A673 (cell line): ENCODE measurements at regions of chr12 and their contacts with region 1.

Region 1: DNA sequence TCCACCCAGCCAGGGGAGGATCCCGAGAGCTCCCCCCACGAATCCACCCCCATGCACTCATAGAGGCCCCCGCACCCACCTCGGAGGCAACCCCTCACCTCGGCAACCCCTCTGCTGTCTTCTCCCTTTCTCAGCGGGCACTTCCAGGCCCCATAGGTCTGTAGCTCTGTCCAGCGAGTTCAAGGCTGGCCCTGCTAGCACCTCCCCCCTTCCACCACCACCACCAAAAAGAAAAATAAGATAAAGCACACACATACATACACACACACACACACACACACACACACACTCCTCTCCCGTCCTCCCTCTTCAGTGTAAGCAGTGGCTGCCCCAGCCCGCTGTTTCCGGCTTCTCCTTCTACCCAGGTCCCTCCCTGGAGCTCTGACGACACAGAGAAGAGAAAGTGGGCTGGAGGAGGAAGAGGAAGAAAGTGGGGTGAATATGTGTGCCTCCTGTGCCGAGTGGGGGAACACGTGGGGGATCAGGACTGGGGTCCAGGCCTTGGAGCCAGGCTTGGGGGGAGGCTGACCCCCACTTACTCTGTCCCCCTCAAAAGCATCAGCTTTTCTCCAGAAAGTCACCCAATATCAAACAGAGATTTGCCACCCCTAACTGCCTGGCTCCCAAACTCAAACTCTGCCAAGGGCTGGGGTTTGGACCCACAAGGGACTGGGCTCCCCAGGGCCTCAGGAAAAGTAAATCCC is at the start of gene STAT6:
- DNase-seq: peak; percentile 85
- H3K4me3 ChIP-seq: peak within 1 kb of the TSS; percentile 51
- H3K27ac ChIP-seq: peak within 1 kb of the TSS; percentile 90
- H3K4me1 ChIP-seq: peaks cover 22% of the 10 kb centered on the region
- H3K27me3 ChIP-seq: no peaks in the 10 kb centered on the region
- CTCF ChIP-seq: no peak; the same call in 1 of the 2 replicates
- total RNA-seq, gene STAT6: 96.3 and 111 TPM in 2 replicates

Region 2: DNA sequence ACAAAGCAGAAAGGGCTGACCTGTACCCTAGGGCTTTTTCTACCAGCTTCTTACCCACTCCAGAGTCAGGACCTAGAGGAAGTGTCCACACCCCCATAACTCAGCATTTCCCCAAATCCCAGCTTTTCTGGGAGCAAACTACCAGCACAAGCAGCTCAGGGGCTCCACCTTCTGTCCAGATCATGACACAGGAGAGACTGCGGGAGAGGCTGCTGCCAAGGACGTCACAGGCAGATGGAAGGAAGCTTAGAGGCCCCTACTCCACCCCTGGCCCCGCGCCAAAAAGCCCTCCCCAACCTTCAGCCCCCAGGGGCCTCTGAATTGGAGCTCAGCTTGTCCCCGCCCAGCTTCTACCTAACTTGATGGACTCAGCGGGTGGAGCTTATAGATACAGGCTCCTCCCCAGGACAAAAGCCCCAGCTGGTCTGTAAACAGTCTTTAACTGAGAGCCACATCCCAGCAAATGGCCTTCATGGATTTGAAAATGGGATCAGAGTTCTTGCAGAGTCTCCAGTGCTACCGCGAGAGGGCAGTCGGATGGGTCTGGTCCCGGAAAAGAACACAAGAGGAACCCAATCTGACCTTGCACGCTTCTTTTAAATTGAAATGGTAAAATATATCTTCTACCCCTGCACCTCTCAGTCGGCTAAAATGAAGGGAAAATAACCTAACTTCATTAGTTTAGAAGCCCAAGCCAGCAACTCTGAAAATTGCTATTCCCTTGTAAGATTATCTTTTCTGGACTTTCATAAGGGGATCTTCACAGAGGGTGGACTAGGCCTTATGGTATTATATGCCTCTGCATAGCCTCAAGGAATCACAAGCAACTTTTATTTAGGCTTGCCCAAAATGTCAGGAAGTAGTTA is 474.3 kb before region 1 on chr12:
- CTCF ChIA-PET with region 1: interaction called, 4 read pairs
- POLR2A ChIA-PET with region 1: no interaction called
- intact Hi-C with region 1: loop called (anchors 5 kb)
- DNase-seq: peak; percentile 100
- H3K4me3 ChIP-seq: peak overlapping the region; percentile 77
- H3K27ac ChIP-seq: peak overlapping the region; percentile 78
- H3K4me1 ChIP-seq: peaks cover 35% of the 10 kb centered on the region
- H3K27me3 ChIP-seq: no peaks in the 10 kb centered on the region
- CTCF ChIP-seq: peak; percentile 82

Region 3: DNA sequence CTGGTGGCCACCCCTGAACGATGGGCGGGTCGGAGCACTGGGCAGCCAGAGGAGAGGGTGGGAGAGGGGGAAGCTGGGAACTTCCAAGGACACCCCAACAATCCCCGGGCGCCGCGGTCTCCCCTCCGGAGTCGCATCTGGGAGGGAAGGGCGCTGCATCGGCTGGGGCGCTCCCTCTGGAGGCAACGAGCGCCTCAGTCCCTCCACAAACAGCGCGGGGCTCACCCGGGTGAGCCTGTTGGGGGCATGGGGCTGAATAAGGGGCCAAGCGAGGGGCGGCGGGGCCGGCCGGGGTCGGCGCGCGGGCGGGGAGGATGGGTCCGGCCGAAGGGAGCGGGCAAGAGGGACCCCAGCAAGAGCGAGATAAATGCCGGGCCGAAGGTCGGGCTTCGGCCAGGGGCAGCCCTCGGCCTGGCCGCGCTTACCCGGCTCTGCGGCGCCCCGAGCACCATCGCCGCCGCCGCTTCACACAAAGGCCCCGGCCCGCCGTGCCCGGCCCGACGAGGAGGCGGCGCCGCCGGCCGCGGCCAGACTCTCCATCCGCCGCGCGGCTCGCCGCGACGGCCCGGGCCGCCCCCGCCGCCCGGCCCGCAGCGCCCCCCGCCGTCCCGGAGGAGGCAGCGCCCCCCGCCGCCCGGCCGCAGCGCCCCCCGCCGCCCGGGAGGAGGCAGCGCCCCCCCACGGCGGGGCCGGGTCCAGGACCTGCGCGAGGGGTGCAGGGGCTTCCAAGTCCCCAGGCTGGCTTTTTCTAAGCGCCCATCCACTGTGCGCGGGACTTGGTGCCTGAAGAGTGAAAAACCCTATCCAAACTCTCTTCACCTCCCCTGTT is 105.0 kb before region 1 on chr12 and contains the start of gene ZBTB39:
- CTCF ChIA-PET with region 1: interaction called, 30 read pairs
- POLR2A ChIA-PET with region 1: no interaction called
- intact Hi-C with region 1: loop called (anchors 1 kb)
- DNase-seq: peak; percentile 85
- H3K4me3 ChIP-seq: peak within 1 kb of the TSS; percentile 95
- H3K27ac ChIP-seq: peak within 1 kb of the TSS; percentile 91
- H3K4me1 ChIP-seq: peaks cover 6% of the 10 kb centered on the region
- H3K27me3 ChIP-seq: no peaks in the 10 kb centered on the region
- CTCF ChIP-seq: peak; percentile 65
- total RNA-seq, gene ZBTB39: 17.4 and 18.2 TPM in 2 replicates

Region 4: GRCh38 chr12:57069523-57069922 is 41.7 kb before region 1 on chr12:
- CTCF ChIA-PET with region 1: interaction called, 87 read pairs
- POLR2A ChIA-PET with region 1: interaction called, 4 read pairs
- intact Hi-C with region 1: loop called (anchors 1 kb)
- DNase-seq: peak; percentile 86
- H3K4me3 ChIP-seq: no peak overlapping the region
- H3K27ac ChIP-seq: peak overlapping the region; percentile 21
- H3K4me1 ChIP-seq: peaks cover 11% of the 10 kb centered on the region
- H3K27me3 ChIP-seq: no peaks in the 10 kb centered on the region
- CTCF ChIP-seq: peak; percentile 87

Region 5: DNA sequence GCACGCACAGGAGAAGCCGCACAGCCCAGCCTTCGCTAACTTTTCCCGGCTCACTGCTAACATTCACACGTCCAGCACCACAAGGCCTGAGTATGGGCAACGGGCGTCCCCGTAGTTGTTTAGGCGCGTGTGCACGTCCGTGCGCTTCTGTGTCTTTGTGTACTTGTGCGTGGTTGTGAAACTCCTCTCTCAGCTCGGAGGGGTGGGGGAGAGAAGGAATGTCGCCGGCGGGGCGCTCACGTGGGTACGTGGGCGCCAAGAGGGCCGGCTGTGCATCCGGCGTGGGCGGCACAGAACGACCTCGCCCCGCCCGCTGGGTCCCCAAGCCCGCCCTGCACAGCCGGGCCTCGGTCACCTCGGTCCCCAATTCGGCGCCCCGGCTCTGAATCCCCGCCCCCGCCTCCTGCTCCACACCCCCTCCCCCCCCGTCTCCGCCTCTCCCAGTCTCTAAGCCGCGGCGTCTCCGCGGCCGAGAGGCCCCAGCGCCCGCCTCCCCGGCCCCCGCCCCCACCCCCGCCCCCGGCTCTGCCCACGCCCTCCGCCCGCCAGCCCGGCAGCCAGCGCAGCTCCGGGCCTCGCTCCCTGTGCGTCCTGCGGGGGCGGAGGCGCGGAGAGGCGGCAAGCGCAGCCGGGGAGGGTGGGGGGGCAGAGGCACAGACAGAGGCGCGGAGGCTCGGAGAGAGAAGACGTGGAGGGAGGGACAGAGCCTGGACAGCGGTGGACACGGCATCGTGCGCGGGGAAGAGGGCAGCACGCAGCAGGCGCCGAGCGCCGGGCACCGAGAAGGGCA is 22.5 kb before region 1 on chr12 and contains the start of gene NAB2:
- CTCF ChIA-PET with region 1: interaction called, 15 read pairs
- POLR2A ChIA-PET with region 1: interaction called, 8 read pairs
- intact Hi-C with region 1: no loop called
- DNase-seq: peak; percentile 98
- H3K4me3 ChIP-seq: peak within 1 kb of the TSS; percentile 93
- H3K27ac ChIP-seq: peak within 1 kb of the TSS; percentile 100
- H3K4me1 ChIP-seq: peaks cover 51% of the 10 kb centered on the region
- H3K27me3 ChIP-seq: no peaks in the 10 kb centered on the region
- CTCF ChIP-seq: no peak
- total RNA-seq, gene NAB2: 58.0 and 61.8 TPM in 2 replicates